ENCODE measurements at regions of chr15 and their contacts with region 1.

Region 1: DNA sequence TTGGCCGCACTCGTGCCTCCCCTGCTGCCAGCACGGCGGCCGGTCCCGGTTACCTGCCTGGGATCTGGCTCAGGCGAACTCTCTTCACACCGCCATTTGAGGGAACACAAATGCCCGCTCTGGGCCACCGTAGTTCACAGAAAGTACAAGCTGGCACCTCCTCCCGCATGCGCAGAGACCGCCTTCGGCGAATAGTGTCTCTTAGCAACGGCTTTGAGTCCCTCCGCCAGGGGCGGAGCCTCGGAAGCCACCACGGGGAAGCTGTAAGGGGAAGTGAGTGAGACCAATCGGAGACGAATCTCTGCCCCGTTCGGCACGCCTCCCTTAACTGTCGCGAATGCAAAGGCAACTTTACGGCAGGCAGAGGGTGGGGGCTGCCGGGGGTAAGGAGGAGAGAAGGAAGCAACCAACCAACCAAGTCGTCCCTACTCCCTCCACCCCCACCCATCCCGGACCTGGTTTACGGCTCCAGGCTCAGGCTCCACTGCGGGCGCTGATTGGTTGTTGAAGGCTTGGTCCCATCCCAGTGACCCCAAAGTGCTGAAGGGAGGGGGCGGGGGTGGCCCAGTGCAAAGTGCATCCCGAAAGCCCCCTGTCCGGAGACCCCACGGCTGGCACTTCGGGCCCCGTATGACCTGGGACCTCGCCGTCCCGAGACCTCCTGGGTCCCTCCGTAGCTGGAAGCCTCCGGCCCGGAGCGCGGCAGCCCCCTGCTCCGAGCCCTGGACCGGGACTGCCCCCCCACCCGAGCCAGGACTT is at the starts of genes ASB7 and LINS1:
- DNase-seq: peak; percentile 100
- H3K4me3 ChIP-seq: peak within 1 kb of the TSS; percentile 75 to 95
- H3K27ac ChIP-seq: peak within 1 kb of the TSS; percentile 71 to 88
- H3K4me1 ChIP-seq: peaks cover 7 to 17% of the 10 kb centered on the region in 2 donors
- H3K27me3 ChIP-seq: no peaks in the 10 kb centered on the region
- CTCF ChIP-seq: no peak
- total RNA-seq, gene ASB7: 9.3 TPM
- total RNA-seq, gene LINS1: 1.7 TPM

Region 2: GRCh38 chr15:99250494-99251435 is 1351.5 kb before region 1 on chr15:
- intact Hi-C with region 1: loop called (anchors 2 kb)
- DNase-seq: peak; percentile 92 to 99
- H3K4me3 ChIP-seq: peak overlapping the region; percentile 63 to 89
- H3K27ac ChIP-seq: peak overlapping the region; percentile 89 to 92
- H3K4me1 ChIP-seq: peaks cover 8 to 14% of the 10 kb centered on the region in 2 donors
- H3K27me3 ChIP-seq: no peaks in the 10 kb centered on the region
- CTCF ChIP-seq: no peak

Region 3: GRCh38 chr15:100349696-100350433 is 252.4 kb before region 1 on chr15:
- intact Hi-C with region 1: loop called (anchors 1 kb)
- DNase-seq: peak; percentile 61 to 98
- H3K4me3 ChIP-seq: peak overlapping the region; percentile 73 to 89
- H3K27ac ChIP-seq: peak overlapping the region; percentile 97 to 99
- H3K4me1 ChIP-seq: peaks cover 7 to 9% of the 10 kb centered on the region in 2 donors
- H3K27me3 ChIP-seq: no peaks in the 10 kb centered on the region
- CTCF ChIP-seq: peak; percentile 80 to 95 (median 84)

Region 4: GRCh38 chr15:101251830-101252820 is 649.9 kb after region 1 on chr15 and contains the start of gene CHSY1:
- intact Hi-C with region 1: loop called (anchors 10 kb)
- DNase-seq: peak; percentile 83 to 96
- H3K4me3 ChIP-seq: peak within 1 kb of the TSS; percentile 94 to 96
- H3K27ac ChIP-seq: peak within 1 kb of the TSS; percentile 84 to 93
- H3K4me1 ChIP-seq: peaks cover 8 to 40% of the 10 kb centered on the region in 2 donors
- H3K27me3 ChIP-seq: no peaks in the 10 kb centered on the region
- CTCF ChIP-seq: peak in 2 of 3 experiments; percentile 38 to 44
- total RNA-seq, gene CHSY1: 47.4 TPM

Region 5: GRCh38 chr15:101652098-101652782 is 1050.0 kb after region 1 on chr15 and contains the start of gene TM2D3:
- intact Hi-C with region 1: loop called (anchors 5 kb)
- DNase-seq: peak; percentile 63 to 95
- H3K4me3 ChIP-seq: peak within 1 kb of the TSS; percentile 97 to 98
- H3K27ac ChIP-seq: peak within 1 kb of the TSS; percentile 99 to 100
- H3K4me1 ChIP-seq: peaks cover 0 to 27% of the 10 kb centered on the region in 2 donors
- H3K27me3 ChIP-seq: no peaks in the 10 kb centered on the region
- CTCF ChIP-seq: peak; percentile 74 to 95 (median 84)
- total RNA-seq, gene TM2D3: 105 TPM

Measured in ascending aorta (tissue), 2 donors.